ENCODE measurements at regions of chr5 and their contacts with region 1.

Region 1: GRCh38 chr5:2710910-2711309 is 40.6 kb downstream of the IRX2 start:
- DNase-seq: no peak
- ATAC-seq: no peak
- H3K4me3 ChIP-seq: no peak overlapping the region
- H3K27ac ChIP-seq: no peak overlapping the region
- H3K4me1 ChIP-seq: no peaks in the 10 kb centered on the region
- H3K27me3 ChIP-seq: peaks cover 0 to 27% (median 0%) of the 10 kb centered on the region in 9 donors
- CTCF ChIP-seq: peak in 1 of 12 donors; percentile 23
- POLR2A ChIP-seq: no peak

Region 2: GRCh38 chr5:3080366-3080765 is 369.5 kb after region 1 on chr5:
- intact Hi-C with region 1: no loop called
- DNase-seq: no peak
- ATAC-seq: no peak
- H3K4me3 ChIP-seq: no peak overlapping the region
- H3K27ac ChIP-seq: no peak overlapping the region
- H3K4me1 ChIP-seq: no peaks in the 10 kb centered on the region
- H3K27me3 ChIP-seq: peaks cover 0 to 10% (median 0%) of the 10 kb centered on the region in 9 donors
- CTCF ChIP-seq: no peak
- POLR2A ChIP-seq: no peak

Region 3: GRCh38 chr5:4271193-4271592 is 1560.3 kb after region 1 on chr5:
- intact Hi-C with region 1: loop called in 1 of 10 experiments (anchors 5 kb)
- DNase-seq: no peak
- ATAC-seq: no peak
- H3K4me3 ChIP-seq: no peak overlapping the region
- H3K27ac ChIP-seq: no peak overlapping the region
- H3K4me1 ChIP-seq: no peaks in the 10 kb centered on the region
- H3K27me3 ChIP-seq: no peaks in the 10 kb centered on the region
- CTCF ChIP-seq: no peak
- POLR2A ChIP-seq: no peak